ENCODE measurements at regions of chr3 and their contacts with region 1.

Region 1: GRCh38 chr3:18649666-18650363 is 224.7 kb upstream of the SATB1 start:
- DNase-seq: peak; percentile 70
- H3K4me3 Mint-ChIP-seq: peak overlapping the region; percentile 59
- H3K27ac Mint-ChIP-seq: peak overlapping the region; percentile 94
- H3K4me1 Mint-ChIP-seq: peaks cover 94% of the 10 kb centered on the region
- H3K27me3 Mint-ChIP-seq: no peaks in the 10 kb centered on the region

Region 2: GRCh38 chr3:18660059-18660458 is 10.2 kb after region 1 on chr3:
- intact Hi-C with region 1: loop called (anchors 1 kb)
- DNase-seq: no peak
- H3K4me3 Mint-ChIP-seq: no peak overlapping the region
- H3K27ac Mint-ChIP-seq: peak overlapping the region; percentile 4
- H3K4me1 Mint-ChIP-seq: peaks cover 79% of the 10 kb centered on the region
- H3K27me3 Mint-ChIP-seq: no peaks in the 10 kb centered on the region

Region 3: DNA sequence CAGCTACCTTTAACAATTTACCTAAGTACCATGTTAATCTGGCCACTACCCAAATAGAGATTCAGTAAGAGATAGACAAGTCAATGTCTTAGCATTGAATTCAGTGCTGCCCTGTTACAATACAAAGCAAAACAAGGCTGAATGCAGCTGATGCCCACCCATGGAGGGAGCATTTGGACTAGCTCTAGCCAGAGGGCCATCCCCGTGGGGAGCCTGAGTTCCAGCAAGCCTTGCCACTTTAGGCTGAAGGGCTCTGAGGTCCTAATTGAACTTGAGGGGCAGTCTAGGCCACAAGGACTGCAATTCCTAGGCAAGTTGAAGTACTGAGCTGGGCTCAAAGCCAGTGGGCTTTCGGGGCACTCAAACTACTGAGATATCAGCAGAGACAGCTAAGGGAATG is 1018.3 kb after region 1 on chr3:
- intact Hi-C with region 1: no loop called
- DNase-seq: no peak
- H3K4me3 Mint-ChIP-seq: no peak overlapping the region
- H3K27ac Mint-ChIP-seq: no peak overlapping the region
- H3K4me1 Mint-ChIP-seq: no peaks in the 10 kb centered on the region
- H3K27me3 Mint-ChIP-seq: no peaks in the 10 kb centered on the region

Measured in activated T-helper 1 cell treated with anti-CD3 and anti-CD28 coated beads, Interleukin-12 subunit alpha, Interleukin-12 subunit beta, Interleukin-2, Interleukin-4 antibody, amounts not matched to agents 30 ng/mL and 10 ng/mL and 1 ng/mL, durations not matched to agents 14 hours and 24 hours and 36 hours (primary cell).